ENCODE measurements at regions of chr7 and their contacts with region 1.

Region 1: GRCh38 chr7:35424869-35425495 is 171.1 kb upstream of the TBX20 start:
- DNase-seq: peak in 2 of 3 donors; percentile 69
- ATAC-seq: peak; percentile 82
- H3K4me3 ChIP-seq: no peak overlapping the region
- H3K4me1 ChIP-seq: no peaks in the 10 kb centered on the region
- CTCF ChIP-seq: peak; percentile 50

Region 2: DNA sequence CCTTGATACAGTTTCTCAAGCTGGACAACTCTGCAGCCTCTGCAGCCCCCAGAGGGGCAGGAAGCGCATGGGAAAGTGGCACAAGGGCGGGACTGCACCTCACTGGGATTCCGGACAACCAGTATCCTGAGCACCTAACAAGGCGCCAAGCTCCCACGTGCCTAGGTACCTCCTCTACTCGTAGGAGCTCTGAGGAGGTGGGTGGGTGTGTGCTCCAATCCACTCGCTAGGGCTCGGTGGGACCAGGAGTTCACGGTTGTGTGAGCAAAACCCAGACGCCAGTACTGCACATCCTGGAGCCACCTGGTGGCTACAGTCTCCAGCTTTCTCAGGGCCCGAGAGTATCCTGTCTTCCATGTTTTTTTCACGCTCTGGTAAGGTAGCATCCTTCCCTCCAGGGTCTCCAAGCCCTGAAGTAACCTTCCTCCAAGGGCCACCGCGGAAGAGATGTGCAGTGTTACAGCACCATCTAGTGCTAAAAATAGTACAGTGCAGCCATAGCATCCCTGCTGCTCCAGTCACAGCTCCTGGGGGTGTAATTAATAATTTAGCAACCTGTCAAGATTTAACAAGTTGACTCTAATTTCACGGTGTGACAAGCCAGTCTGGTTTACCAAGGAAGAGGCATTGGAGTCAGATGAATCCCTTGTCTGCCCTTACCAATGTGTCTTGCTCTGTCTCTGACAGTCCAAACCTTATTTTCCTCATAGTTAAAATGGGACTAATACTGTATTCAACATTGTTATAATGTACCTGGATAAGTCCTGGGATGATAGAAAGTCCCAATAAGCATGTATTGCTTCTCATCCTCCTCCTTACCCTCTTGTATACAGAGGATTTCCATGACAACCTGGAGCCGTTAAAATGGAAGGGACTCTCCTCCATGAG is 199.6 kb after region 1 on chr7:
- intact Hi-C with region 1: loop called in 1 of 2 experiments (anchors 10 kb)
- DNase-seq: peak in 1 of 3 donors; percentile 41
- ATAC-seq: peak; percentile 86
- H3K4me3 ChIP-seq: no peak overlapping the region
- H3K4me1 ChIP-seq: no peaks in the 10 kb centered on the region
- CTCF ChIP-seq: peak; percentile 56

Measured in mucosa of descending colon (tissue), 3 donors.